K562 (cell line): ENCODE measurements at regions of chr19 and their contacts with region 1.

Region 1: DNA sequence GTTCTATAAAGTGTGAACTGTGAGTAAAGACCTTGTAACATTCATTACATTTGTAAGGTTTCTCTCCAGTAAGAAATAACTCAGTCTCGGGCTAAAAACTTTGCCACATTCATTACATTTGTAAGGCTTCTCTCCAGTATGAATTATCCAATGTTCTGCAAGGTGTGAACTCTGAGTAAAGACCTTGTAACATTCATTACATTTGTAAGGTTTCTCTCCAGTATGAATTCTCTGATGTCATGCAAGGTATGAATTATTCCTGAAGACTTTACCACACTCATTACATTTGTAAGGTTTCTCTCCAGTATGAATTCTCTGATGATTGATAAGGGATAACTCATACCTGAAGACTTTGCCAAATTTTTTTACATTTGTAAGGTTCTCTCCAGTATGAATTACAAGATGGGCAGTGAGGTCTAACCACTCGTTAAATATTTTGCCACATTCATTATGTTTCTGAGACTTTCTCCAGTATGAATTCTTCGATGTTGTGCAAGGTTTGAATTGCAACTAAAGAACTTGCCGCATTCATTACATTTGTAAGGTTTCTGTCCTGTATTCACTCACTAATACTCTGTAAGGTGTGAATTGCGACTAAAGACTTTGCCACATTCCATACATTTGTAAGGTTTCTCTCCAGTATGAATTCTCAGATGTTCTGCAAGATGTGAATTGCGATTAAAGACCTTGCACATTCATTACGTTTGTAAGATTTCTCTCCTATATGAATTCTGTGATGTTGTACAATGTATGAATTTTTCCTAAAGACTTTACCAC is 21.2 kb downstream of the ZNF578 start:
- DNase-seq: no peak
- ATAC-seq: no peak
- H3K4me3 ChIP-seq: no peak overlapping the region
- H3K27ac ChIP-seq: no peak overlapping the region
- H3K4me1 ChIP-seq: no peaks in the 10 kb centered on the region
- H3K27me3 ChIP-seq: no peaks in the 10 kb centered on the region
- CTCF ChIP-seq: no peak
- EP300 ChIP-seq: no peak
- POLR2A ChIP-seq: no peak
- RAD21 ChIP-seq: no peak

Region 2: DNA sequence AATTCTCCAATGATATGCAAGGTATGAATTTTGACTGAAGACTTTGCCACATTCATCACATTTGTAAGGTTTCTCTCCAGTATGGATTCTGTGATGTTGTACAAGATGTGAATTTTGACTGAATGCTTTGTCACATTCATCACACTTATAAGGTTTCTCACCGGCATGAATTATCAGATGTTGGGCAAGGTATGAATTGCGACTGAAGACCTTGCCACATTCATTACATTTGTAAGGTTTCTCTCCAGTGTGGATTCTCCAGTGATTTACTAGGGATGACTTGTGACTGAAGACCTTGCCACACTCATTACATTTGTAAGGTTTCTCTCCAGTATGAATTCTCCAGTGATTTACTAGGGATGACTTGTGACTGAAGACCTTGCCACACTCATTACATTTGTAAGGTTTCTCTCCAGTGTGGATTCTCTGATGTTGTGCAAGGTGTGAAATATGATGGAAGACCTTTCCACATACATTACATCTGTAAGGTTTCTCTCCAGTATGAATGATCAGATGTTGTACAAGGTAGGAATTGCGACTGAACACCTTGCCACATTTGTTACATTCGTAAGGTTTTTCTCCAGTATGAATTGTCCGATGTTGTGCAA is 138.9 kb after region 1 on chr19:
- CTCF ChIA-PET with region 1: no interaction called
- POLR2A ChIA-PET with region 1: no interaction called
- in situ Hi-C with region 1: no loop called
- intact Hi-C with region 1: no loop called
- DNase-seq: no peak
- ATAC-seq: no peak
- H3K4me3 ChIP-seq: no peak overlapping the region
- H3K27ac ChIP-seq: no peak overlapping the region
- H3K4me1 ChIP-seq: no peaks in the 10 kb centered on the region
- H3K27me3 ChIP-seq: no peaks in the 10 kb centered on the region
- CTCF ChIP-seq: no peak
- EP300 ChIP-seq: no peak
- POLR2A ChIP-seq: no peak
- RAD21 ChIP-seq: no peak

Region 3: DNA sequence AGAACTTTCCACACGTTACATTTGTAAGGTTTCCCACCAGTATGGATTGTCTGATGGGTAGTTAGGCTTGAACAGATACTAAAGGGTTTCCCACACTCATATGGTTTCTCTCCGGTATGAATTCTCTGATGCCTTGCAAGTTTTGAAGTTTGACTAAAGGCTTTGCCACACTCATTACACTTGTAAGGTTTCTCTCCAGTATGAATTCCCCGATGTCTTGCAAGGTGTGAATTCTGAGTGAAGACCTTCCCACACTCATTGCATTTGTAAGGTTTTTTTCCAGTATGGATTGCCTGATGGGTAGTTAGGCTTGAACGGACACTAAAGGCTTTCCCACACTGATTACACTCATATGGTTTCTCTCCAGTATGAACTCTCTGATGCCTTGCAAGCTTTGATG is 665.8 kb after region 1 on chr19:
- CTCF ChIA-PET with region 1: no interaction called
- POLR2A ChIA-PET with region 1: no interaction called
- in situ Hi-C with region 1: no loop called
- intact Hi-C with region 1: loop called (anchors 5 kb)
- DNase-seq: no peak
- ATAC-seq: no peak
- H3K4me3 ChIP-seq: no peak overlapping the region
- H3K27ac ChIP-seq: no peak overlapping the region
- H3K4me1 ChIP-seq: no peaks in the 10 kb centered on the region
- H3K27me3 ChIP-seq: no peaks in the 10 kb centered on the region
- CTCF ChIP-seq: no peak
- EP300 ChIP-seq: no peak
- POLR2A ChIP-seq: no peak
- RAD21 ChIP-seq: no peak